ENCODE measurements at regions of chr20 and their contacts with region 1.

Region 1: DNA sequence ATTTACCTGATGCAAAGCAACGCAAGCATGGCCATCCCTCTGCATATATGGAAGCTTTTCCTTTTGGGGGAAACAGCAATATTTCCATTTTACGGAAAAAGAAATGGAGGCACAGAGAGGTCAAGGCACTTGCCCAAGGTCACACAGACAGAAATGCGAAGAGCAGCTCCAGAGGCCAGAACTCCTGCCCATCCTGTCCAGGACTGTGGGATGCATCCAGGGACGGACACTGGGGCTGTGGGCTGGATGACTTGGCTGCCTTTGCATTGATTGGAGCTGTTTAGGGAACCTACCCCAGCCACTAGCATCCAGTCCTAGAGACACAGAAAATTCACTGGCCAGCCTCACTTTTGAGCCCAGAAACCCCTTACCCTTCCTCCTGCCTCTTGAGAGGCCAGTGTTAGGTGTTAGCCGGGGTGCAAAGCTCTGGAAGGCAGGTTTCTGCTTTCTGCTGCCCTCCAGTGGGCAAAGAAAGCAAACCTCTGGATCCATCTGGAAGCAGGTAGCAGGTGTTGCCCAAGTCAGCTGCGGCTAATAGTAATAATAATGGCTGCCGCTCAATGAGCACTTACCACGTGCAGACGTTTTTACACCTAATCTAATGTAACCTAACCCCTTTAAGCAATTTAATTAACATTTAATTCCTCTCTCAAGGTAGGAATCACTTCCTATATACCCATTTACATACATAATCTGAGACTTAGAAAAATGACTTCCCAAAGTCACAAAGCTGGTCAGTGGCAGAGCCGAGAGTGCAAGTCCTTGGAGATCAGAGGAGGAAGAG is 31.7 kb upstream of the CCN5 start:
- DNase-seq: peak; percentile 75 to 91
- ATAC-seq: peak; percentile 86 to 87
- H3K4me3 ChIP-seq: no peak overlapping the region
- H3K27ac ChIP-seq: peak overlapping the region in 1 of 2 experiments; percentile 89; a peak in 1 of 6 replicates
- H3K4me1 ChIP-seq: peaks cover 22% of the 10 kb centered on the region
- CTCF ChIP-seq: peak; percentile 83
- EP300 ChIP-seq: no peak
- POLR2A ChIP-seq: no peak
- RAD21 ChIP-seq: peak; percentile 77 to 81

Region 2: GRCh38 chr20:44407402-44408184 is 275.9 kb before region 1 on chr20:
- CTCF ChIA-PET with region 1: no interaction called
- POLR2A ChIA-PET with region 1: no interaction called
- DNase-seq: peak; percentile 66 to 80
- ATAC-seq: peak; percentile 62 to 81
- H3K4me3 ChIP-seq: no peak overlapping the region
- H3K27ac ChIP-seq: peak overlapping the region; percentile 48 to 76; a peak in 5 of 6 replicates
- H3K4me1 ChIP-seq: peaks cover 31% of the 10 kb centered on the region
- CTCF ChIP-seq: no peak
- EP300 ChIP-seq: no peak
- POLR2A ChIP-seq: no peak
- RAD21 ChIP-seq: no peak

Region 3: GRCh38 chr20:44635877-44636276 is 47.6 kb before region 1 on chr20:
- CTCF ChIA-PET with region 1: interaction called, 14 read pairs
- POLR2A ChIA-PET with region 1: no interaction called
- DNase-seq: no peak
- ATAC-seq: no peak
- H3K4me3 ChIP-seq: no peak overlapping the region
- H3K27ac ChIP-seq: no peak overlapping the region
- H3K4me1 ChIP-seq: no peaks in the 10 kb centered on the region
- CTCF ChIP-seq: no peak
- EP300 ChIP-seq: no peak
- POLR2A ChIP-seq: no peak
- RAD21 ChIP-seq: no peak

Region 4: GRCh38 chr20:44664131-44664530 is 19.3 kb before region 1 on chr20:
- CTCF ChIA-PET with region 1: interaction called, 74 read pairs
- POLR2A ChIA-PET with region 1: no interaction called
- DNase-seq: no peak
- ATAC-seq: no peak
- H3K4me3 ChIP-seq: no peak overlapping the region
- H3K27ac ChIP-seq: no peak overlapping the region
- H3K4me1 ChIP-seq: no peaks in the 10 kb centered on the region
- CTCF ChIP-seq: no peak
- EP300 ChIP-seq: no peak
- POLR2A ChIP-seq: no peak
- RAD21 ChIP-seq: no peak

Region 5: GRCh38 chr20:44714696-44715482 is 31.4 kb after region 1 on chr20 and contains the start of gene CCN5:
- CTCF ChIA-PET with region 1: interaction called, 525 read pairs
- POLR2A ChIA-PET with region 1: interaction called, 3 read pairs
- DNase-seq: peak; percentile 79 to 80
- ATAC-seq: peak; percentile 75 to 82
- H3K4me3 ChIP-seq: peak within 1 kb of the TSS; percentile 20; the same call in 1 of the 3 replicates
- H3K27ac ChIP-seq: peak within 1 kb of the TSS; percentile 96 to 98
- H3K4me1 ChIP-seq: peaks cover 69% of the 10 kb centered on the region
- CTCF ChIP-seq: no peak
- EP300 ChIP-seq: 0 out of 5 replicates have a peak, but pooled peaks of 1 of the 2 experiments have one; percentile 8
- POLR2A ChIP-seq: no peak
- RAD21 ChIP-seq: no peak
- polyA plus RNA-seq, gene CCN5: 9.9 and 10.1 TPM in 2 replicates

Region 6: GRCh38 chr20:44738813-44739477 is 55.5 kb after region 1 on chr20:
- CTCF ChIA-PET with region 1: interaction called, 525 read pairs
- POLR2A ChIA-PET with region 1: no interaction called
- DNase-seq: peak; percentile 94 to 95
- ATAC-seq: peak; percentile 71 to 85
- H3K4me3 ChIP-seq: no peak overlapping the region
- H3K27ac ChIP-seq: 0 out of 6 replicates have a peak overlapping the region, but pooled peaks of 1 of the 2 experiments have one; percentile 19
- H3K4me1 ChIP-seq: peaks cover 21% of the 10 kb centered on the region
- CTCF ChIP-seq: no peak
- EP300 ChIP-seq: no peak
- POLR2A ChIP-seq: no peak
- RAD21 ChIP-seq: no peak

Region 7: DNA sequence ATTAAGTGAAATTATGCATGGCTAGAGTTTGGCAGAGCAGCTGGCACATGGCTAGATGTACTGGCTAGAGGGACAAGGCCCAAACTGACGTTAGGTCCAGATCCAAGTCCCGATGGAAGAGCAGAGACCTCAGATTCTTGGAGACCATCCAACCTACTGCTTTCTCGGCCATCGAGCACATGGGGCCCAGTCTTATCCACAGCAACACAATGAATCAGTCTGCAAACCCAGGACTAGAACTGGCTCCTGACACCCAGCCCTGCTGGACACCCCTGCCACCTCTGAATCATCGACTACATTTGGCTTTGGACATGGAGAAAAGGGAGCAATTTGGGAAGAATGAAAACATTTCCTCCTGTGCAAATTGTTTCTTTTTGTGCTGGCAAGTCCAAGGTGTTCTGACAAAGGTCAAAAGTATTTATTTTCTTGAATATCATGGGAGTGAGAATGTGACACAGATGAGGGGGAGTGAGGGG is 178.1 kb after region 1 on chr20:
- CTCF ChIA-PET with region 1: interaction called, 64 read pairs
- POLR2A ChIA-PET with region 1: no interaction called
- DNase-seq: no peak
- ATAC-seq: peak; percentile 47 to 56; a peak in 2 of 6 replicates
- H3K4me3 ChIP-seq: no peak overlapping the region
- H3K27ac ChIP-seq: peak overlapping the region in 1 of 2 experiments; percentile 45; a peak in 2 of 6 replicates
- H3K4me1 ChIP-seq: peaks cover 11% of the 10 kb centered on the region; the same call in 2 of the 3 replicates
- CTCF ChIP-seq: no peak
- EP300 ChIP-seq: no peak
- POLR2A ChIP-seq: no peak
- RAD21 ChIP-seq: no peak

Region 8: DNA sequence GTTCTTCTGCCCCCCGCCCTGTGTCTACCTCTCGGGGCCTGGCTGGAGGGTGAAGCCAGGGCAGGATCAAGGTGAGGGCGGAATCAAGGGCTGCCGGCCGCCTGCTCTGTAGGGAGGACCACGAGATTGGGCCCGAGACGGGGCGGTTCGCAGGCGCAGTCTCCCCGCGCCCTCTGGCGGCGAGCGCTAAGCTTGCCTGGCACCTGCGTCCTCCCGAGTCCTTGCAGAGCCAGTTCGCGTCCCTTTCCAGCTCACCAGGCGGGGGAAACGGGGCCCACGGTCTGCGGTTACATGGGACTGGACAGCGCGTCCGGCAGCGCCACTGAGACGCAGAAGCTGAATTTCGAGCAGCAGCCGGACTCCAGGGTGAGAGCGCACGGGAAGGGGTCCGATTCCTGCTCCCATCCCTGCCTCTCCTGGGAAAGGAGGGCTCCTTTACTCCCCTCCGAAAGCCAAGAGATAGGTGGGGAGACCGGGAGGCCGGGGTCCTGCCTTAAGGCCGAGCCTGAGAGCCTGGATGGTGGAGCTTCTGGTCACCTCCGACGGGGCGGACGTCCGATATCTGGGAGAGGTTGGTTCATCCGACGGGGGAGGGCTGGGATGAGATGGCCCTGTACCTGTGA is 628.2 kb after region 1 on chr20:
- CTCF ChIA-PET with region 1: no interaction called
- POLR2A ChIA-PET with region 1: no interaction called
- DNase-seq: peak; percentile 75 to 78
- ATAC-seq: peak; percentile 79 to 94
- H3K4me3 ChIP-seq: no peak overlapping the region; the same call in 2 of the 3 replicates
- H3K27ac ChIP-seq: peak overlapping the region in 1 of 2 experiments; percentile 41; a peak in 1 of 6 replicates
- H3K4me1 ChIP-seq: no peaks in the 10 kb centered on the region
- CTCF ChIP-seq: peak; percentile 77
- EP300 ChIP-seq: no peak
- POLR2A ChIP-seq: no peak
- RAD21 ChIP-seq: peak; percentile 60 to 68